ENCODE measurements at regions of chr5 and their contacts with region 1.

Region 1: DNA sequence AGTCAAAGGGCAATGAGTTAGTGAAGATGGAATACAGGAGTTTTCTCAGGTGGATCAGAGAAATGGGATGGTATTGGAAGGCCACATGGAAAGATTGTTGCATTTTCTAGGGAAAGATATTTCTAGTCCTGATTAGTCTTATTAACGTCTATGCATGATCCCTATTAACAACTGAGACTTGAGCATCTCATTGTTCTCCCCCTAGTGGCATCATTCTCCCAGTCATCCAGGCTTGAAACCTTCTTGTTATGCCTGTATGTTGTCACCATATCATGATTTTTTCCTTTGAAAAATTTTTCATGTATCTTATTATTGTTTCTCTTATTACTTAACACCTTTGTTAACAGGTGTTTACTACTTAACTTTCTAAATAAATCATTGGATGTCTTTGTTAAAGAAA is 34.4 kb downstream of the KIF2A start:
- ATAC-seq: peak in 1 of 8 experiments; percentile 25
- H3K4me3 ChIP-seq: no peak overlapping the region
- H3K27ac ChIP-seq: no peak overlapping the region
- H3K4me1 ChIP-seq: no peaks in the 10 kb centered on the region

Region 2: DNA sequence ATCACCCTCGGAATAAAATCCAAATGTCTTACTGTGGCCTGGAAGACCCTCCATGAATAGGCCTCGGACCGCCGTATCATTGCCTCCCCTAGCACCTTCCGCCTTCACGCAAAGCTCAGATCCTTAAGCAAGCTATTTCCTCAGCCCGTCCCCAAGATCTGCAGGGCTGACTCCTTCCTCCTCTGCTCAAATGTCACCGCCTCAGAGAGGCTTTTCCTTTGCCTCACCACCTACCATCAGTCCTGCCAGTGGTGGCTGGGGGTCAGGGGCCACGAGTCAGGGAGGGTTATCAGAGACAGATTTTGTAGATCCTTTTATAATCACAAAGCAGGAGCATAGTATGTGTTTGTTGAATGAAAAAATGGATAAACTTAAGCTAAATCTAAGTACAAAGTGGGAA is 108.8 kb before region 1 on chr5:
- in situ Hi-C with region 1: loop called in 1 of 9 experiments (anchors 25 kb)
- ATAC-seq: no peak
- H3K4me3 ChIP-seq: no peak overlapping the region
- H3K27ac ChIP-seq: no peak overlapping the region
- H3K4me1 ChIP-seq: peaks cover 3% of the 10 kb centered on the region in 2 donors